WTC11 (cell line): ENCODE measurements at regions of chr1 and their contacts with region 1.

Region 1: GRCh38 chr1:27154991-27155781 is at the start of gene SLC9A1:
- DNase-seq: peak; percentile 93
- ATAC-seq: peak; percentile 97
- H3K4me3 Mint-ChIP-seq: peak within 1 kb of the TSS; percentile 92
- H3K27ac Mint-ChIP-seq: peak within 1 kb of the TSS; percentile 78
- H3K4me1 Mint-ChIP-seq: peaks cover 26% of the 10 kb centered on the region
- H3K27me3 Mint-ChIP-seq: no peaks in the 10 kb centered on the region
- CTCF ChIP-seq: no peak
- total RNA-seq, gene SLC9A1: 22.0 to 25.1 TPM (median 22.5 TPM) in 3 replicates

Region 2: DNA sequence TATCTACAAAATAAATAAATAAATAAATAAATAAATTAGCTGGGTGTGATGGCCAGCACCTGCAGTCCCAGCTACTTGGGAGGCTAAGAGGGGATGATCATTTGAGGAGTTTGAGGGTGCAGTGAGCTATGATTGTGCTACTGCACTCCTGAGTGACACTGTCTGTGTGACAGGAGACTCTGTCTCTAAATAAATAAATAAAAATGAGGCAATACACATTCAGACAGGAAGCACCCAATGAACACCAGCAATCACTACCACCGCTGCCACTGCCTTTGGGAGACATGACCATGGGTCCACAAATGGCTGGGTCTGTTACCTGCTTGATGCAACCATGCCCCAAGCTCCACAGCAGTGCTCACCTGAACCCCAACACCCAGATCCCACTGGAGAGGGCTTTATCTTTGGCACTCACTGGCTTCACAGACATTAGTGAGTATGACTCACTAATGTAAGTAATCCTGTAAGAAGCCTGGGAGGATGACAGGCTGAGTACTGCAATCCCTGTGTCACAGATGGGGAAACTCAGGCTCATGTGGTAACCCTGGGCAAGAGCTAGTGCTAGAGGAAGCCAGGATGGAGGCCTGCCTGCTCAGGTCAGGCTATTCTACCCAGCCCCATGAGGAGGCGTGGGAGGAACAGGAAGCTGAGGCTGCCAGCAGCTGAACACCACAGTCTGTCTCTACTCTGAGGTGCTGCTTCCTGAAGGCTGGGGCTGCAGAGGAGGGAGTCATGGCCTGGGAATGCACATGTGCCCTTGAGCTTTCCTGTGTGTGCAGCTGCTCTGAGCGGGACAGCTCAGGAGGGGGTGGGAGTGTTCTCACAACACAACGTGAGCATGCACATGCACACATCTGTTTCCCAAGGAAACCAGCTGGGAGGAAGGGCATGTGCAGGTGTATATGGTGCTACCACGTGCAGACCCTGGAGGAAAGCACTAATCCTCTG is 43.3 kb before region 1 on chr1:
- CTCF ChIA-PET with region 1: interaction called, 16 read pairs
- POLR2A ChIA-PET with region 1: interaction called, 5 read pairs
- DNase-seq: no peak
- ATAC-seq: peak; percentile 63
- H3K4me3 Mint-ChIP-seq: no peak overlapping the region
- H3K27ac Mint-ChIP-seq: peak overlapping the region; percentile 74
- H3K4me1 Mint-ChIP-seq: peaks cover 7% of the 10 kb centered on the region
- H3K27me3 Mint-ChIP-seq: no peaks in the 10 kb centered on the region
- CTCF ChIP-seq: no peak